ENCODE measurements at regions of chr15 and their contacts with region 1.

Region 1: GRCh38 chr15:82540055-82540983 is at the start of gene RPS17:
- DNase-seq: peak; percentile 97 to 100 (median 98)
- ATAC-seq: peak; percentile 92
- H3K4me3 ChIP-seq: peak within 1 kb of the TSS; percentile 69 to 75
- H3K4me3 Mint-ChIP-seq: peak within 1 kb of the TSS; percentile 97
- H3K27ac ChIP-seq: peak within 1 kb of the TSS; percentile 83 to 86
- H3K27ac Mint-ChIP-seq: peak within 1 kb of the TSS; percentile 97
- H3K4me1 ChIP-seq: peaks cover 20% of the 10 kb centered on the region
- H3K4me1 Mint-ChIP-seq: peaks cover 33% of the 10 kb centered on the region
- H3K27me3 ChIP-seq: no peaks in the 10 kb centered on the region
- H3K27me3 Mint-ChIP-seq: no peaks in the 10 kb centered on the region
- CTCF ChIP-seq: peak; percentile 98
- total RNA-seq, gene RPS17: 3,034 to 3,037 TPM

Region 2: DNA sequence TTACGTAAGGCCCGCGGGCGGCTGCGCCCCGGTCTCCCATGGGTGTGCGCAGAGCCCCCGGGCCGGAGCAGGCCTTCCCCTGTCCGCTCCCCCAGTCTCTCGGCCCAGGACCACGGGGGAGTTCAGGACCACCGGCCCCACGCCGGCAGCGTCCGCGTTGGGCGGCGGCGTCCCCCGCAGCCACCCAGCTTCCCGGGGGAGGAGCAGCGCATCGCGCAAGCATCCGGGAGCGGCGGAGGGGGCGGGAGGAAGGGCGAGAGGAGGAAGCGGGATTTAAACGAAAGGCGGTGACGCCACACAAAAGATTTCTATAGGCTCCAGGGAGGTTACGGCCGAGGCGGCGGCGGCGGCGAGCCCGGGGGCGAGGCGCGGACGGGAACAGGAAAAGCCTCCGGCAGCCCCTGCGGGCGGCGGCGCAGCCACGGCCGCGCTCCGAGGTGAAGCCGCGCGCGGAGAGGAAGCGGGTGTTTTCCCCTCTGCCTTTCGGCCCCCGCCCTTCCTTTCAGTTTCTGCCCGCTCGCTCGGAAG is 1539.6 kb before region 1 on chr15 and contains the start of gene TLNRD1:
- CTCF ChIA-PET with region 1: no interaction called
- POLR2A ChIA-PET with region 1: interaction called, 3 read pairs
- intact Hi-C with region 1: loop called in 1 of 2 experiments (anchors 5 kb)
- DNase-seq: peak; percentile 49 to 93 (median 81)
- ATAC-seq: peak; percentile 59
- H3K4me3 ChIP-seq: peak within 1 kb of the TSS; percentile 74 to 78
- H3K4me3 Mint-ChIP-seq: peak within 1 kb of the TSS; percentile 96
- H3K27ac ChIP-seq: peak within 1 kb of the TSS; percentile 84 to 88
- H3K27ac Mint-ChIP-seq: peak within 1 kb of the TSS; percentile 98
- H3K4me1 ChIP-seq: peaks cover 42% of the 10 kb centered on the region
- H3K4me1 Mint-ChIP-seq: peaks cover 49% of the 10 kb centered on the region
- H3K27me3 ChIP-seq: no peaks in the 10 kb centered on the region
- H3K27me3 Mint-ChIP-seq: no peaks in the 10 kb centered on the region
- CTCF ChIP-seq: no peak
- total RNA-seq, gene TLNRD1: 15.3 to 15.6 TPM

Region 3: GRCh38 chr15:82312586-82313349 is 227.6 kb before region 1 on chr15:
- CTCF ChIA-PET with region 1: no interaction called
- POLR2A ChIA-PET with region 1: no interaction called
- intact Hi-C with region 1: no loop called
- DNase-seq: peak in 1 of 9 experiments; percentile 38
- ATAC-seq: no peak
- H3K4me3 ChIP-seq: no peak overlapping the region
- H3K4me3 Mint-ChIP-seq: no peak overlapping the region
- H3K27ac ChIP-seq: no peak overlapping the region
- H3K27ac Mint-ChIP-seq: no peak overlapping the region
- H3K4me1 ChIP-seq: no peaks in the 10 kb centered on the region
- H3K4me1 Mint-ChIP-seq: no peaks in the 10 kb centered on the region
- H3K27me3 ChIP-seq: no peaks in the 10 kb centered on the region
- H3K27me3 Mint-ChIP-seq: no peaks in the 10 kb centered on the region
- CTCF ChIP-seq: no peak

Region 4: GRCh38 chr15:82647045-82647834 is 106.9 kb after region 1 on chr15 and contains the start of gene CPEB1:
- CTCF ChIA-PET with region 1: no interaction called
- POLR2A ChIA-PET with region 1: no interaction called
- intact Hi-C with region 1: loop called (anchors 1 kb)
- DNase-seq: peak in 8 of 9 experiments; percentile 9 to 64 (median 50)
- ATAC-seq: peak; percentile 60
- H3K4me3 ChIP-seq: peak within 1 kb of the TSS; percentile 32 to 60
- H3K4me3 Mint-ChIP-seq: peak within 1 kb of the TSS; percentile 78
- H3K27ac ChIP-seq: no peak within 1 kb of the TSS
- H3K27ac Mint-ChIP-seq: no peak within 1 kb of the TSS
- H3K4me1 ChIP-seq: peaks cover 20% of the 10 kb centered on the region
- H3K4me1 Mint-ChIP-seq: peaks cover 12% of the 10 kb centered on the region
- H3K27me3 ChIP-seq: peaks cover 0 to 11% of the 10 kb centered on the region in 2 experiments
- H3K27me3 Mint-ChIP-seq: peaks cover 21% of the 10 kb centered on the region
- CTCF ChIP-seq: peak; percentile 22
- total RNA-seq, gene CPEB1: 0.27 to 0.53 TPM

Region 5: GRCh38 chr15:82709421-82710207 is 169.3 kb after region 1 on chr15 and contains the start of gene AP3B2:
- CTCF ChIA-PET with region 1: no interaction called
- POLR2A ChIA-PET with region 1: no interaction called
- intact Hi-C with region 1: loop called in 1 of 2 experiments (anchors 1 kb)
- DNase-seq: peak; percentile 40 to 82 (median 67)
- ATAC-seq: peak; percentile 95
- H3K4me3 ChIP-seq: peak within 1 kb of the TSS; percentile 44 to 81
- H3K4me3 Mint-ChIP-seq: peak within 1 kb of the TSS; percentile 76
- H3K27ac ChIP-seq: no peak within 1 kb of the TSS
- H3K27ac Mint-ChIP-seq: no peak within 1 kb of the TSS
- H3K4me1 ChIP-seq: peaks cover 13% of the 10 kb centered on the region
- H3K4me1 Mint-ChIP-seq: peaks cover 1% of the 10 kb centered on the region
- H3K27me3 ChIP-seq: peaks cover 0 to 6% of the 10 kb centered on the region in 2 experiments
- H3K27me3 Mint-ChIP-seq: peaks cover 25% of the 10 kb centered on the region
- CTCF ChIP-seq: no peak
- total RNA-seq, gene AP3B2: 0.81 to 0.90 TPM

Region 6: GRCh38 chr15:82789491-82789890 is 249.2 kb after region 1 on chr15:
- CTCF ChIA-PET with region 1: no interaction called
- POLR2A ChIA-PET with region 1: no interaction called
- intact Hi-C with region 1: no loop called
- DNase-seq: no peak
- ATAC-seq: no peak
- H3K4me3 ChIP-seq: no peak overlapping the region
- H3K4me3 Mint-ChIP-seq: no peak overlapping the region
- H3K27ac ChIP-seq: no peak overlapping the region
- H3K27ac Mint-ChIP-seq: no peak overlapping the region
- H3K4me1 ChIP-seq: no peaks in the 10 kb centered on the region
- H3K4me1 Mint-ChIP-seq: no peaks in the 10 kb centered on the region
- H3K27me3 ChIP-seq: no peaks in the 10 kb centered on the region
- H3K27me3 Mint-ChIP-seq: peaks cover 6% of the 10 kb centered on the region
- CTCF ChIP-seq: no peak

Region 7: GRCh38 chr15:82809404-82810060 is 269.2 kb after region 1 on chr15 and contains the start of gene WHAMM:
- CTCF ChIA-PET with region 1: interaction called, 4 read pairs
- POLR2A ChIA-PET with region 1: interaction called, 9 read pairs
- intact Hi-C with region 1: loop called (anchors 1 to 2 kb)
- DNase-seq: peak; percentile 89 to 98 (median 94)
- ATAC-seq: peak; percentile 93
- H3K4me3 ChIP-seq: peak within 1 kb of the TSS; percentile 67 to 69
- H3K4me3 Mint-ChIP-seq: peak within 1 kb of the TSS; percentile 92
- H3K27ac ChIP-seq: peak within 1 kb of the TSS; percentile 93 to 97
- H3K27ac Mint-ChIP-seq: peak within 1 kb of the TSS; percentile 97
- H3K4me1 ChIP-seq: peaks cover 26% of the 10 kb centered on the region
- H3K4me1 Mint-ChIP-seq: peaks cover 32% of the 10 kb centered on the region
- H3K27me3 ChIP-seq: no peaks in the 10 kb centered on the region
- H3K27me3 Mint-ChIP-seq: no peaks in the 10 kb centered on the region
- CTCF ChIP-seq: no peak
- total RNA-seq, gene WHAMM: 123 to 124 TPM

Region 8: DNA sequence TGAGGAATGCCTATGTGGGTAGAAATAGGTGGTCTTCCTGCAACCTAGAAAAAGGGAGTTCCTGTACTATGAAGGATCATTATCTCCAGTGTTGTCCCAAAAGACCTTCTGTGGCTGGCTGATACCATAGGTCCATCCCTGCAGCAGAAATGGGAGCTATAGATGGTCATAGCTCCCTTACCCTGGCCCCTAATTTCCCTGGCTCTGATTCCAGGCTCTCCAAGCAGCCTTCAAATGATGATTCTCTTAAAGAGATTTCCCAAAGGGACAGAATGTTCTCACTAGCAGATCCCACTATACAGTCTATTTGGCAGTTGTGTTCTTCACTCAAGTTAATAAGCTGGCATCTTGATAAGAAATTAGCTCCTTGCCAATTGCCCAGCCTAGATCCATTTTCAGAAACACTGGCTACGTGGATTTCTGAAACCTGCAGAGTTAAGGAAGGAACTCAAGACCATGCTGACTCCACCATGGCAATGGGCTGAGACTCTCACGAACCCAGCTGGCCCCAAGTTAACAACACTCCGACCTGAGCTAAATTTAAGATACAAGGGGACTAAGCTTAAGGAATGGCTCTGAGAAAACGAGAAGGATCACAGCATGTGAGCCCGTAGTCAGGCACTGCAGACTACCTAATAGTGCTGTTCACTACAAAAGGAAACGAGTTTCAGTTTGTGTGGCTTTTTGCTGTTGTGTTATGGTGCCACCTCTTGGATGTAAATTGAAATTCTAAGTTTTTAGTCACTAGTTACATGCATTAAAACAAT is 459.8 kb after region 1 on chr15:
- CTCF ChIA-PET with region 1: interaction called, 11 read pairs
- POLR2A ChIA-PET with region 1: interaction called, 5 read pairs
- intact Hi-C with region 1: loop called in 1 of 2 experiments (anchors 2 kb)
- DNase-seq: peak in 5 of 9 experiments; percentile 26 to 73 (median 27)
- ATAC-seq: peak; percentile 97
- H3K4me3 ChIP-seq: peak overlapping the region; percentile 24 to 29
- H3K4me3 Mint-ChIP-seq: peak overlapping the region; percentile 81
- H3K27ac ChIP-seq: peak overlapping the region; percentile 24 to 54
- H3K27ac Mint-ChIP-seq: peak overlapping the region; percentile 84
- H3K4me1 ChIP-seq: peaks cover 9% of the 10 kb centered on the region
- H3K4me1 Mint-ChIP-seq: peaks cover 12% of the 10 kb centered on the region
- H3K27me3 ChIP-seq: no peaks in the 10 kb centered on the region
- H3K27me3 Mint-ChIP-seq: no peaks in the 10 kb centered on the region
- CTCF ChIP-seq: peak; percentile 63

Region 9: GRCh38 chr15:83066734-83067637 is 526.7 kb after region 1 on chr15 and contains the start of gene BTBD1:
- CTCF ChIA-PET with region 1: no interaction called
- POLR2A ChIA-PET with region 1: interaction called, 5 read pairs
- intact Hi-C with region 1: loop called (anchors 1 kb)
- DNase-seq: peak; percentile 44 to 89 (median 75)
- ATAC-seq: peak; percentile 78
- H3K4me3 ChIP-seq: peak within 1 kb of the TSS; percentile 77 to 84
- H3K4me3 Mint-ChIP-seq: peak within 1 kb of the TSS; percentile 87
- H3K27ac ChIP-seq: peak within 1 kb of the TSS; percentile 65 to 78
- H3K27ac Mint-ChIP-seq: peak within 1 kb of the TSS; percentile 77
- H3K4me1 ChIP-seq: peaks cover 42% of the 10 kb centered on the region
- H3K4me1 Mint-ChIP-seq: peaks cover 26% of the 10 kb centered on the region
- H3K27me3 ChIP-seq: no peaks in the 10 kb centered on the region
- H3K27me3 Mint-ChIP-seq: no peaks in the 10 kb centered on the region
- CTCF ChIP-seq: no peak
- total RNA-seq, gene BTBD1: 32.5 to 33.6 TPM

Measured in CD8-positive, alpha-beta T cell (primary cell).